ENCODE measurements at regions of chr12 and their contacts with region 1.

Region 1: DNA sequence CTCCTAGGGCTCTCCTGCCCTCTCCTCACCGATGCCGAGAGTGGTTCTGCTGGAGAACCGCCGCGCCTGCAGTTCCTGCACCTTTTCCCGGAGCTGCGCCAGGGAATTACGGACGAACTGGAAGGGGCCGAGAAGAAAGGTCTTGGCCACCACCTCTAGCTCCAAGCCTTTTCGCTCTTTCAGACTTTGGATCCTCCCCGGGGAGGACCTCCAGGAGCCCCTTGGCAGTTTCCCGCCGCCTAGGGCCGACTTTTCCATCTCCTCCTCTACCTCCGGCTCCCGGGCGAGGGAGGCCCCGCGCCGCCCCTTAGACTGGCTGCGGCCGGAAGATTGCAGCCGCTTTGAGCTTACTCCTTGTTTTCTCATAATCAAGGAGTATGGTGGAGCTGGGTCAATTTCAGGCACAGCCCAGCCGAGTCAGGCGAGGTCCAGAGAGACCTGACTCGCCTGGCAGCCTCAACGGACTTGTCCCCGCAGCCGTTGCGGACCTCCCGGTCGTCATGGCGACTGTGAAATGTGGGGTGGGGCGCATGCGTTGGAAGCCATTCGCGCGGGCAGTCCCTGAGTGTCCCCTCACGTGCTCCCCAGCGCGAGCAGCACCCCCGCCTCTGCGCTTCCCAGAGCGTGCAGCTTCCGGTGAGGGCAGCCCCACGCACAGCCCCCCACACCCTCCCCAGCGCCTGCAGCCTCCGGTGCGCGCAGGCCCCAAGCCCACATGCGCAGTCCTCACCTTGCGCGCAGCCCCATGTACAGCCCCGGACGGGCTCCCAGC is at the start of gene DPY19L2:
- DNase-seq: peak; percentile 33
- H3K4me3 ChIP-seq: peak within 1 kb of the TSS; percentile 41 to 51 (median 43)
- H3K27ac ChIP-seq: no peak within 1 kb of the TSS
- H3K4me1 ChIP-seq: peaks cover 10% of the 10 kb centered on the region
- H3K27me3 ChIP-seq: peaks cover 12% of the 10 kb centered on the region
- CTCF ChIP-seq: no peak
- total RNA-seq, gene DPY19L2: 0.92 to 1.3 TPM

Region 2: DNA sequence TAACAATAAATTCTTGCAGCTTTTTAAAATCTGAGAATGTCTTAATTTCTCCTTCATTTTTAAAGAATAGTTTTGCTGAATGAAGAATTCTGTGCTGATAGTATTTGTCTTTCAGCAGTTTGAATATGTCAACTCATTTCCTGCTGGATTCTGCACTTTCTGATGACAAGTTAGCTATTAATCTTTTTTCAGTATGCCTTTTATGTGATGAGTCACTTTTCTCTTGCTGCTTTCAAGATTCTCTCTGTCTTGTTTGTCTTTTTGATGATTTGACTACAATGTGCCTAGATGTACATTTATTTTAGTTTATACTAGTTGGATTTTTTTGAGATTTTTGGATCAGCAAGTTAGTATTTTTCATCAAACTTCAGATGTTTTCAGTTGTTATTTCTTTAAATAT is 429.3 kb before region 1 on chr12:
- CTCF ChIA-PET with region 1: no interaction called
- dilution Hi-C with region 1: no loop called
- in situ Hi-C with region 1: no loop called
- intact Hi-C with region 1: no loop called
- DNase-seq: no peak
- H3K4me3 ChIP-seq: no peak overlapping the region
- H3K27ac ChIP-seq: no peak overlapping the region
- H3K4me1 ChIP-seq: no peaks in the 10 kb centered on the region
- H3K27me3 ChIP-seq: no peaks in the 10 kb centered on the region
- CTCF ChIP-seq: no peak

Region 3: GRCh38 chr12:63802012-63802608 is 133.9 kb after region 1 on chr12:
- CTCF ChIA-PET with region 1: no interaction called
- dilution Hi-C with region 1: no loop called
- in situ Hi-C with region 1: no loop called
- intact Hi-C with region 1: loop called (anchors 5 kb)
- DNase-seq: peak; percentile 13
- H3K4me3 ChIP-seq: no peak overlapping the region
- H3K27ac ChIP-seq: no peak overlapping the region
- H3K4me1 ChIP-seq: no peaks in the 10 kb centered on the region
- H3K27me3 ChIP-seq: no peaks in the 10 kb centered on the region
- CTCF ChIP-seq: peak; percentile 35 to 53

Region 4: GRCh38 chr12:63955831-63956609 is 287.8 kb after region 1 on chr12:
- CTCF ChIA-PET with region 1: no interaction called
- dilution Hi-C with region 1: no loop called
- in situ Hi-C with region 1: no loop called
- intact Hi-C with region 1: no loop called
- DNase-seq: no peak
- H3K4me3 ChIP-seq: no peak overlapping the region
- H3K27ac ChIP-seq: no peak overlapping the region
- H3K4me1 ChIP-seq: no peaks in the 10 kb centered on the region
- H3K27me3 ChIP-seq: no peaks in the 10 kb centered on the region
- CTCF ChIP-seq: no peak

Region 5: DNA sequence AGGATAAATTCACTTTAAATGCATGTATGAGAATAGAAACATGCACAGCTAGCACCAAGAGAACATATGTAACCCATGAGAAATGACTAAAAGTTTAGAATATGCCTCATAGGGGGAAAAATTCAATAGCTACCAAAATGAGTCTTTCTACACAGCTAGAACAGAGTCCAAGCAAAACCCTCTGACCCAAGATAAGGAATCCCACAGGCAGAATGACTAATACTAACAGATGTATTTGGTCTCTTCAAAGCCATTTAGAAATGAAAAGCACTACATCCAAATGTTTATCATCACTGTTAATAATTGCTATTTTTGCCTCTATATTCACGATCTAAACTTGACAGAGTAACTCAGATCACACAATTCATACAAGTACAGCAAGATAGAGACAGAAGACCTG is 509.9 kb after region 1 on chr12:
- CTCF ChIA-PET with region 1: no interaction called
- dilution Hi-C with region 1: no loop called
- in situ Hi-C with region 1: no loop called
- intact Hi-C with region 1: no loop called
- DNase-seq: peak; percentile 53
- H3K4me3 ChIP-seq: no peak overlapping the region
- H3K27ac ChIP-seq: peak overlapping the region; percentile 18
- H3K4me1 ChIP-seq: peaks cover 39% of the 10 kb centered on the region
- H3K27me3 ChIP-seq: no peaks in the 10 kb centered on the region
- CTCF ChIP-seq: no peak

Region 6: GRCh38 chr12:64293654-64294364 is 625.6 kb after region 1 on chr12:
- CTCF ChIA-PET with region 1: no interaction called
- dilution Hi-C with region 1: no loop called
- in situ Hi-C with region 1: no loop called
- intact Hi-C with region 1: no loop called
- DNase-seq: no peak
- H3K4me3 ChIP-seq: no peak overlapping the region
- H3K27ac ChIP-seq: no peak overlapping the region
- H3K4me1 ChIP-seq: no peaks in the 10 kb centered on the region
- H3K27me3 ChIP-seq: no peaks in the 10 kb centered on the region
- CTCF ChIP-seq: no peak